ENCODE measurements at regions of chr5 and their contacts with region 1.

Region 1: GRCh38 chr5:179033004-179033580 is 9.5 kb downstream of the ZNF879 start:
- DNase-seq: no peak
- H3K4me3 ChIP-seq: no peak overlapping the region
- H3K27ac ChIP-seq: no peak overlapping the region
- H3K4me1 ChIP-seq: no peaks in the 10 kb centered on the region
- H3K27me3 ChIP-seq: no peaks in the 10 kb centered on the region
- CTCF ChIP-seq: no peak

Region 2: DNA sequence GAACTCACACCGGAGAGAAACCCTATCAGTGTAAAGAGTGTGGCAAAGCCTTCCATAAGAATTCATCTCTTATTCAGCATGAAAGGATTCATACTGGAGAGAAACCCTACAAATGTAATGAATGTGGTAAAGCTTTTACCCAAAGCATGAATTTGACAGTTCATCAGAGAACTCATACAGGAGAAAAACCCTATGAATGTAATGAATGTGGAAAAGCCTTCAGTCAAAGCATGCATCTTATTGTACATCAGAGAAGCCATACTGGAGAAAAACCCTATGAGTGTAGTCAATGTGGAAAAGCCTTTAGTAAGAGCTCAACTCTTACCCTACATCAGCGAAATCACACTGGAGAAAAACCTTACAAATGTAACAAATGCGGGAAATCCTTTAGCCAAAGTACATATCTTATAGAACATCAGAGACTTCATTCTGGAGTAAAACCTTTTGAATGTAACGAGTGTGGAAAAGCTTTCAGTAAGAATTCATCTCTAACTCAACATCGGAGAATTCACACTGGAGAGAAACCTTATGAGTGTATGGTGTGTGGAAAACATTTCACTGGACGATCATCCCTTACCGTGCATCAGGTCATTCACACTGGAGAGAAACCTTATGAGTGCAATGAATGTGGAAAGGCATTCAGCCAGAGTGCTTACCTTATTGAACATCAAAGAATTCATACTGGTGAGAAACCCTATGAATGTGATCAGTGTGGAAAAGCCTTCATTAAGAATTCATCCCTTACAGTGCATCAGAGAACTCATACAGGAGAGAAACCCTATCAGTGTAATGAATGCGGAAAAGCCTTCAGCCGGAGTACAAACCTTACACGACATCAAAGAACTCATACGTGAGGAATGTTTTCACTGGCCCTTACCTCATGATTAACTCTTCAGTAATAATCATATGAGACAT is 101.0 kb before region 1 on chr5:
- intact Hi-C with region 1: loop called (anchors 10 kb)
- DNase-seq: no peak
- H3K4me3 ChIP-seq: no peak overlapping the region
- H3K27ac ChIP-seq: no peak overlapping the region
- H3K4me1 ChIP-seq: no peaks in the 10 kb centered on the region
- H3K27me3 ChIP-seq: no peaks in the 10 kb centered on the region
- CTCF ChIP-seq: no peak

Region 3: DNA sequence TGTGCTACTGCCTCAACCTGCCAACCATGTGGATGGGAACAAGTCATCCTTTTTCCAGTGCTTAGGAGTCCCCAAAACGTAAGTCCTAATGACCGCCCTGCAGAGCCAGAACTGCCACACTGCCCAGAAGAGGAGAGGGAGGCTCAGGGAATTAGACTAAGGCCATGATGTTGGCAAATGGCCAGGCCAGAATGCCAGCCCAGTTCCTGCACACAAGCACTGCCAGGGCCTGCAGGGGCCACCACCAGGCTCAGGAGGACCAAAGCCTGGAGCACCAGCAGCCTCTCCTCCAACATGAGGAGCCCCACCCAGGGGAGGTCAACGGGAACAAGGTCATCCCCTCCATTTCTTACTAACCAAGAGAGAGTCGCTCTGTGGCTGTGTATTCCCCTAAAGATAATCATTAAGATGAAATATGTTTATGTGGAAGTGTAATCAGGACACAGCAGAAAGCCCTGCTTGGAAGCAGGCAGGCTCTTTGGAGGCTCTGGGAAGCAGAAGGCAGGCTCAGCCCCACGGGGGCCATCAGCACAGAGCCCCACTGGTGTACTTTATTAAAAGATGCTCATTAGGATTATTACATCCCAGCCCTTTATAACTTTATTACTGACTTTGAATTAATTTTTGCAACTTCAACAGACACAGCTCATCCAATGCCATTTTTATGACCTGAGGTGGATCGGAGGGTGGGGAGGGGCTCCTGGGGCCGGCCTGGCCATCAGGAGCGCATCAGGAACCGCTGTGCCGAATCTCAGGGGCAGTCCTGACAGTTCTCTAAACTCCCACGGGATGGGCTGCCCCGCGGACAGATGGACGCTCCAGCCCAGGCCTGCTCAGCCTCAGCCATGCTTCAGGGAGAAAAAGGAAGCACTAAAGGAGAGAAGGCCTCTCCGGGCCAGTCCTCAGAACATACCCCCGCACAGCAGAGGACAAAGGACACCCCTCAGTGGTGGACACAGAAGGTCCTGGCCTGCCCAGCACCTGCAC is 185.2 kb after region 1 on chr5:
- intact Hi-C with region 1: no loop called
- DNase-seq: no peak
- H3K4me3 ChIP-seq: no peak overlapping the region
- H3K27ac ChIP-seq: no peak overlapping the region
- H3K4me1 ChIP-seq: no peaks in the 10 kb centered on the region
- H3K27me3 ChIP-seq: no peaks in the 10 kb centered on the region
- CTCF ChIP-seq: no peak